ENCODE measurements at regions of chr4 and their contacts with region 1.

Region 1: GRCh38 chr4:7101692-7102515 is 34.0 kb upstream of the GRPEL1 start:
- DNase-seq: peak; percentile 85
- H3K4me3 Mint-ChIP-seq: peak overlapping the region; percentile 95
- H3K27ac Mint-ChIP-seq: peak overlapping the region; percentile 3
- H3K4me1 Mint-ChIP-seq: peaks cover 12% of the 10 kb centered on the region
- H3K27me3 Mint-ChIP-seq: peaks cover 22% of the 10 kb centered on the region

Region 2: DNA sequence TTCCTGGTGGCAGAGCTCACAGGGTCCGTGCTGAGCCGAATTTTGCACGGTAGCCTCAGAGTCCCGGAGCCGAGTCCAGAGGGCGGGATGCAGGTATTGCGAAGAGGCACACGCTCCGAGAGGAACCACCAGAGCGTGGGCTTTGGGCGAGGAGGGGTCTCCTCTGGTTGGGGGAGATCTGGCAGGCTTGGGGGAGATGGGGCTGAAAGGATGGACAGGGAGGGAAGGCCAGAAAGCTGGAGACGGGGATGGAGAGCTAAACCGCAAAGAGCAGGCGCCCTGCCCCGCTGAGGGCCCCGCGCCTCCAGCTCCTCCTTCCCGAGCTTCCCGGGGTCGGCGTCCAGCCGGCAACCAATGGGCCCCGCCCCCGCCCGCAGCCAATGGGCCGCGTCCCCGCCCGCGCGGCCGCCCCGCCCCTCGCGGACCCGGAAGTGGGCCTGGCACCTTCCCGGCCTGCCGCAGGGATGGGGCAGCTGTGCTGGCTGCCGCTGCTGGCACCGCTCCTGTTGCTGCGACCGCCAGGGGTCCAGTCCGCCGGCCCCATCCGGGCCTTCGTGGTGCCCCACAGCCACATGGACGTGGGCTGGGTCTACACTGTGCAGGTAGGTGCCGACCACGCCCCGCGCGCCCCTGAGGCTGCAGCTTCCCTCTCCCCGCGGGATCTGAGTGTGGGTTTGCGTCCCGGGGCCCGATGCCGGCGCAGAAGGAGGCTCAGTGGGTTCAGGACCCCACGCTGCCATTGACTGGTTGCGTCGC is 527.0 kb before region 1 on chr4 and contains the start of gene MAN2B2:
- intact Hi-C with region 1: loop called (anchors 2 kb)
- DNase-seq: peak; percentile 96
- H3K4me3 Mint-ChIP-seq: peak within 1 kb of the TSS; percentile 89
- H3K27ac Mint-ChIP-seq: peak within 1 kb of the TSS; percentile 83
- H3K4me1 Mint-ChIP-seq: peaks cover 9% of the 10 kb centered on the region
- H3K27me3 Mint-ChIP-seq: peaks cover 8% of the 10 kb centered on the region
- total RNA-seq, gene MAN2B2: 12.7 and 14.9 TPM in 2 replicates

Region 3: DNA sequence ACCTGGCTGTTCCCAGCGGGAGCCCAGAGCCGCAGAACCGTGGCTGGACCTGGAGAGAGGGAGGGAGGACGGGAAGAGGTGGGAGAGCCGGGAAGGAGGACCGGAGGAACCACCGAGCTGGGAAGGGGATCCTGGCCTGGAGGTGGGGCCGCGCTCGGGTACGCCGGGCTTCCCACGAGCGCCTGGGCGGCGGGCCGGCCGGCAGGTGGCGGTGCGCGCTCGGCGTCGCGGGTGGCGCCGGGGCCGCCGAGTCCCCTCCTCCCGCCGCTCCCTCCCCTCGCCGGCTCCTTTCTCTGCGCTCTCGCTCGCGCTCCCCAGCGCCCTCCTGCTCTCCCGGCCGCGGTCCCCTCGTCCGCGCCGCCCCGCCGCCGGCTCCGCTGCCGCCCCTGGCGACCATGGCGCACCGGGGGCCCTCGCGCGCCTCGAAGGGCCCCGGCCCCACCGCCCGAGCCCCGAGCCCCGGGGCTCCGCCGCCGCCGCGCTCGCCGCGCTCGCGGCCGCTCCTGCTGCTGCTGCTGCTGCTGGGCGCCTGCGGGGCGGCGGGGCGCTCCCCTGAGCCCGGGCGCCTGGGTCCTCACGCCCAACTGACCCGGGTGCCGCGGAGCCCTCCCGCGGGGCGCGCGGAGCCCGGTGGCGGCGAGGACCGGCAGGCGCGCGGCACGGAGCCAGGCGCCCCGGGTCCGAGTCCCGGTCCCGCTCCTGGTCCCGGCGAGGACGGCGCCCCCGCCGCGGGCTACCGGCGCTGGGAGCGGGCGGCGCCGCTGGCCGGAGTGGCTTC is 90.5 kb after region 1 on chr4 and contains the start of gene SORCS2:
- intact Hi-C with region 1: no loop called
- DNase-seq: peak; percentile 85
- H3K4me3 Mint-ChIP-seq: peak within 1 kb of the TSS; percentile 51
- H3K27ac Mint-ChIP-seq: no peak within 1 kb of the TSS
- H3K4me1 Mint-ChIP-seq: no peaks in the 10 kb centered on the region
- H3K27me3 Mint-ChIP-seq: peaks cover 55% of the 10 kb centered on the region
- total RNA-seq, gene SORCS2: 0.05 TPM in 1 of 2 replicates, not detected in the other

Measured in activated CD4-positive, alpha-beta T cell treated with anti-CD3 and anti-CD28 coated beads, Interleukin-2, amount 10 ng/mL, durations not matched to agents 24 days and 14 days (primary cell).